Activated CD4-positive, alpha-beta T cell treated with anti-CD3 and anti-CD28 coated beads for 36 hours (primary cell): ENCODE measurements at regions of chr2 and their contacts with region 1.

Region 1: GRCh38 chr2:219543601-219544358 is at the starts of genes CHPF and TMEM198:
- DNase-seq: peak; percentile 98
- ATAC-seq: peak; percentile 85
- H3K4me3 Mint-ChIP-seq: peak within 1 kb of the TSS; percentile 87
- H3K27ac Mint-ChIP-seq: peak within 1 kb of the TSS; percentile 66
- H3K4me1 Mint-ChIP-seq: peaks cover 22% of the 10 kb centered on the region
- H3K27me3 Mint-ChIP-seq: no peaks in the 10 kb centered on the region
- total RNA-seq, gene CHPF: 14.1 to 17.1 TPM
- total RNA-seq, gene TMEM198: 2.4 to 2.7 TPM

Region 2: GRCh38 chr2:218536804-218537494 is 1006.8 kb before region 1 on chr2:
- CTCF ChIA-PET with region 1: no interaction called
- POLR2A ChIA-PET with region 1: no interaction called
- intact Hi-C with region 1: no loop called
- DNase-seq: no peak
- ATAC-seq: no peak
- H3K4me3 Mint-ChIP-seq: no peak overlapping the region
- H3K27ac Mint-ChIP-seq: no peak overlapping the region
- H3K4me1 Mint-ChIP-seq: no peaks in the 10 kb centered on the region
- H3K27me3 Mint-ChIP-seq: no peaks in the 10 kb centered on the region

Region 3: DNA sequence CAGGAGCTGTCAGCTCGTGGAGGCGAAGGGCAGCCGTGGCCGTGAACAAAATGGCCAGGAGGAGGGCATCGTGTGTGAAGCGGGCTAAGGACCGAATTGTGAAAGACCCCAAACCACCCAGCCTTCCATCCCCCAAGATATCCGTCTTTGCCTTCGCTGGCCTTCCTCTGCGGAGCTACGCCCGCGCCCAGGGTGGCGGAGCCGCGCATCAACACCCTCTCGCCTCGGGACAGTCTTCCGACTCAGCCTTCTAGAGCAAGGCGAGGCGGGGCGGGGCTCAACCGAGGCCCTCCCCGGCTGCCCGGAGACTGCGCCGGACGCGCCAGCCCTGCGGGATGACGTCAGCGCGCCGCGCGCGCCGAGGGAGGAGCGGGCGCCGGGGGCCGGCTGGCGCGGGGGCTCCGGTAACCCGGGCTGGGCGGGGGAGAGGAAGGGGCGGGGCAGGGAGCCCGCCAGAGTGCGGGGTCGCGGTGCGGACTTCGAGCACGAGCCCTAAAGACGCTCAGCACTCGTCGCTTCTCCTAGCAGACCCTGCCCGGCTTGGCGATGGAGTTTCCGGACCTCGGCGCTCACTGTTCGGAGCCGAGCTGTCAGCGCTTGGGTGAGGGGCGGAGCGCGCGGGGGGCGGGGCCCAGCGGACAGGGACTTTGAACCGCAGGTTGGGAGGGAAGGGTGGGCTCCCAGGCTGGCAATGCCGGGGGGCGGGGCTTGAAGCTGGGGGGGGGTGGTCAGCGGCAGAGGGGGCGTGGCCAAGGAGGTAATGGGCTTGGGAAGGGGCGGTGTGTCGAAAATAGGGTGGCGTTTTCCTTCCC is 337.1 kb before region 1 on chr2 and contains the start of gene ZFAND2B:
- CTCF ChIA-PET with region 1: no interaction called
- POLR2A ChIA-PET with region 1: no interaction called
- intact Hi-C with region 1: loop called in 1 of 2 experiments (anchors 5 kb)
- DNase-seq: peak; percentile 98
- ATAC-seq: peak; percentile 96
- H3K4me3 Mint-ChIP-seq: peak within 1 kb of the TSS; percentile 86
- H3K27ac Mint-ChIP-seq: peak within 1 kb of the TSS; percentile 94
- H3K4me1 Mint-ChIP-seq: peaks cover 34% of the 10 kb centered on the region
- H3K27me3 Mint-ChIP-seq: no peaks in the 10 kb centered on the region
- total RNA-seq, gene ZFAND2B: 21.5 to 27.6 TPM

Region 4: GRCh38 chr2:219498280-219499057 is 45.3 kb before region 1 on chr2 and contains the start of gene GMPPA:
- CTCF ChIA-PET with region 1: interaction called, 17 read pairs
- POLR2A ChIA-PET with region 1: interaction called, 3 read pairs
- intact Hi-C with region 1: loop called (anchors 1 kb)
- DNase-seq: peak; percentile 96
- ATAC-seq: peak; percentile 97
- H3K4me3 Mint-ChIP-seq: peak within 1 kb of the TSS; percentile 86
- H3K27ac Mint-ChIP-seq: peak within 1 kb of the TSS; percentile 72
- H3K4me1 Mint-ChIP-seq: peaks cover 38% of the 10 kb centered on the region
- H3K27me3 Mint-ChIP-seq: peaks cover 38% of the 10 kb centered on the region
- total RNA-seq, gene GMPPA: 35.2 to 35.5 TPM

Region 5: GRCh38 chr2:219560037-219560892 is 16.5 kb after region 1 on chr2:
- CTCF ChIA-PET with region 1: interaction called, 11 read pairs
- POLR2A ChIA-PET with region 1: no interaction called
- intact Hi-C with region 1: no loop called
- DNase-seq: peak; percentile 48
- ATAC-seq: peak; percentile 70
- H3K4me3 Mint-ChIP-seq: no peak overlapping the region
- H3K27ac Mint-ChIP-seq: no peak overlapping the region
- H3K4me1 Mint-ChIP-seq: no peaks in the 10 kb centered on the region
- H3K27me3 Mint-ChIP-seq: peaks cover 6% of the 10 kb centered on the region

Region 6: GRCh38 chr2:219689676-219690628 is 146.2 kb after region 1 on chr2:
- CTCF ChIA-PET with region 1: interaction called, 21 read pairs
- POLR2A ChIA-PET with region 1: no interaction called
- intact Hi-C with region 1: loop called (anchors 1 kb)
- DNase-seq: peak; percentile 65
- ATAC-seq: peak; percentile 37
- H3K4me3 Mint-ChIP-seq: no peak overlapping the region
- H3K27ac Mint-ChIP-seq: no peak overlapping the region
- H3K4me1 Mint-ChIP-seq: peaks cover 16% of the 10 kb centered on the region
- H3K27me3 Mint-ChIP-seq: peaks cover 21% of the 10 kb centered on the region

Region 7: DNA sequence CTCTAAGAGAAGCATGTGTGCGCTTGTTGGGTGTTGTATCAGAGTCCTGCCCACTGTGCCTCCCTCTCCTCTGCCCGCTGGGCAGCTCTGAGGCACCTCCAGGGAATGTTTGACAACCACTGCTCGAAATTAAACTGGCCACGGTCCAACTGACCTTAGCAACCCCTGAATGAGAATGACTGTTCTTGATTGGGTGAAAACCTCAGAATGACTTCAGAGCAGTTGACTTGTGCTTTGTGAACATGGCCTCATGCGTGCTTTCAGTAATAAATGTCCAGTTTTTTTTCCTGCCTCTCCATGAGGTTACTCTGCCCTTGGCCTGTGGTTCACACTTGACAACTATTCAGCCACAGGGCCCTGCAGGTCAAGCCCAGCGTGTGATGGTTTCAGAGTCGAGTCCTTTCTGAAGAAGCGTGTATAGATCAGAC is 178.6 kb after region 1 on chr2:
- CTCF ChIA-PET with region 1: no interaction called
- POLR2A ChIA-PET with region 1: no interaction called
- intact Hi-C with region 1: no loop called
- DNase-seq: no peak
- ATAC-seq: no peak
- H3K4me3 Mint-ChIP-seq: no peak overlapping the region
- H3K27ac Mint-ChIP-seq: no peak overlapping the region
- H3K4me1 Mint-ChIP-seq: no peaks in the 10 kb centered on the region
- H3K27me3 Mint-ChIP-seq: peaks cover 11% of the 10 kb centered on the region